Mammary epithelial cell (primary cell): ENCODE measurements at regions of chr5 and their contacts with region 1.

Region 1: GRCh38 chr5:36690041-36690961 is 83.9 kb downstream of the SLC1A3 start:
- DNase-seq: peak; percentile 81
- H3K4me3 ChIP-seq: peak overlapping the region; percentile 41 to 70 (median 55)
- H3K27ac ChIP-seq: peak overlapping the region; percentile 54
- H3K4me1 ChIP-seq: peaks cover 22% of the 10 kb centered on the region
- H3K27me3 ChIP-seq: no peaks in the 10 kb centered on the region
- CTCF ChIP-seq: peak; percentile 89 to 94

Region 2: GRCh38 chr5:36252722-36253365 is 437.5 kb before region 1 on chr5:
- CTCF ChIA-PET with region 1: no interaction called
- dilution Hi-C with region 1: no loop called
- in situ Hi-C with region 1: loop called in 1 of 2 experiments (anchors 10 kb)
- intact Hi-C with region 1: no loop called
- DNase-seq: no peak
- H3K4me3 ChIP-seq: no peak overlapping the region
- H3K27ac ChIP-seq: no peak overlapping the region
- H3K4me1 ChIP-seq: no peaks in the 10 kb centered on the region
- H3K27me3 ChIP-seq: no peaks in the 10 kb centered on the region
- CTCF ChIP-seq: no peak

Region 3: DNA sequence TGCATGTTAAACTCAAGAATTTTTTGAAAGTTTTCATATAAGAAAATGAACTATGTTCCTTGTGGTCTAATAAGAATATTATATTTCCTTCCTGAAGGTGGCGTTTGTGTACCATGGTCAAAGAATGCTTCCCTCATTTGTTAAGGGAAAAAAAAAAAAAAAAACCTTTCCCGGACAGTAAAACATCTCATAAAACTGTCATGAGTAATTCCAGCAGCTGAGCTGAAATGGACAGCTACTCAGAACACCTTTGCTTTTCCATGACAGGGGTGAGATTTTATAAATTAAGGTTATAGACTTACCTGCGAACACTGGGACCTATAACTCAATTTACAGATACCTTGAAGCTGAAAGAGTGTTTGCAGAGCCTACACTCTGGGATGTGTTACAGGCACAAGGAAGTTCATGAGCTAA is 275.4 kb before region 1 on chr5:
- CTCF ChIA-PET with region 1: interaction called, 21 read pairs
- dilution Hi-C with region 1: no loop called
- in situ Hi-C with region 1: loop called (anchors 5 kb)
- intact Hi-C with region 1: loop called (anchors 1 kb)
- DNase-seq: peak; percentile 60
- H3K4me3 ChIP-seq: no peak overlapping the region
- H3K27ac ChIP-seq: no peak overlapping the region
- H3K4me1 ChIP-seq: peaks cover 23% of the 10 kb centered on the region
- H3K27me3 ChIP-seq: no peaks in the 10 kb centered on the region
- CTCF ChIP-seq: peak; percentile 40 to 55

Region 4: DNA sequence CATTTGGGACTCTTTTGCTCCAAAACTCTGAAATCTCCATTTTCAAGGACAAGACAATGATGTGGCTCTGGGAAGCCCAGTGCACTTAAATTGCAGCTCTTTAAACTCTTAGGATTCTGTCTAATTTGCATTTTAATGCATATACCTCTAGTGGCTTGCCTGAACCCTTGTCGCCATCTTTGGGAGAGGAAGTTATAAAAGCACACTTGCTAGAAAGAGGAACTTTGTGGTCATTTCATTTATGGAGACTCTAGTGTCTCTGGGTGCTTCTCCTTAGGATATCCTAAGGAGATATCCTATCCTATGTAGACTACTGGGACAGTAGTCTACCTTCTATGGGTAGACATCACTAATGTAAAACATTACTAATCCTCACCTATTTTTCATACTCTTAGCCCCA is 161.2 kb before region 1 on chr5:
- CTCF ChIA-PET with region 1: interaction called, 4 read pairs
- dilution Hi-C with region 1: no loop called
- in situ Hi-C with region 1: no loop called
- intact Hi-C with region 1: loop called (anchors 5 kb)
- DNase-seq: no peak
- H3K4me3 ChIP-seq: no peak overlapping the region
- H3K27ac ChIP-seq: no peak overlapping the region
- H3K4me1 ChIP-seq: peaks cover 14% of the 10 kb centered on the region
- H3K27me3 ChIP-seq: no peaks in the 10 kb centered on the region
- CTCF ChIP-seq: no peak

Region 5: DNA sequence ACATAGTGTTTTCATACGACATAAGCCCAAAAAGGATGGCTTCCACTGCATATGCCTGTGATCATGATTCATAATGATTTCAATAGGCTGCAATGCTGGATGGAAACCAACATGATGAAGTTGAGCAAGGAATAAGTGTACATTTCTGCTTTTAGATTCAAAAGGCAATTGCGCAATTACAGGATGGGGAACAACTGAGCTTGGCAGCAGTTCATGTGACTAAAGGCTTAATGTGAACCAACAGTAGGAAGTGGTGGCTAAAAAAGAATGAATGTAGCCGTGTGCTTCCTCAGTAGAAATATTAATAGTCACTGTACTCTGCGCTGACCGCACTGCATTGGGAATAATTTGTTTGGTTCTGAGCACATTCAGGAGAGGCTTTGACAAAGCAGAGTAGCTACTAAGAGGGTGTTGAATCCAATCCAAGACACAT is 32.7 kb before region 1 on chr5:
- CTCF ChIA-PET with region 1: interaction called, 8 read pairs
- dilution Hi-C with region 1: no loop called
- in situ Hi-C with region 1: no loop called
- intact Hi-C with region 1: loop called (anchors 1 kb)
- DNase-seq: peak; percentile 99
- H3K4me3 ChIP-seq: no peak overlapping the region
- H3K27ac ChIP-seq: peak overlapping the region; percentile 76
- H3K4me1 ChIP-seq: peaks cover 51% of the 10 kb centered on the region
- H3K27me3 ChIP-seq: no peaks in the 10 kb centered on the region
- CTCF ChIP-seq: no peak